Naive thymus-derived CD8-positive, alpha-beta T cell (primary cell): ENCODE measurements at regions of chr16 and their contacts with region 1.

Region 1: GRCh38 chr16:89246903-89247733 is 29.6 kb downstream of the ZNF778 start:
- DNase-seq: peak; percentile 90 to 99 (median 95)
- ATAC-seq: peak; percentile 85 to 87
- H3K4me3 Mint-ChIP-seq: peak overlapping the region; percentile 67 to 86 (median 76)
- H3K27ac Mint-ChIP-seq: peak overlapping the region in 7 of 10 donors; percentile 51 to 85 (median 75)
- H3K4me1 Mint-ChIP-seq: peaks cover 5 to 33% (median 10%) of the 10 kb centered on the region in 4 donors
- H3K27me3 Mint-ChIP-seq: no peaks in the 10 kb centered on the region

Region 2: DNA sequence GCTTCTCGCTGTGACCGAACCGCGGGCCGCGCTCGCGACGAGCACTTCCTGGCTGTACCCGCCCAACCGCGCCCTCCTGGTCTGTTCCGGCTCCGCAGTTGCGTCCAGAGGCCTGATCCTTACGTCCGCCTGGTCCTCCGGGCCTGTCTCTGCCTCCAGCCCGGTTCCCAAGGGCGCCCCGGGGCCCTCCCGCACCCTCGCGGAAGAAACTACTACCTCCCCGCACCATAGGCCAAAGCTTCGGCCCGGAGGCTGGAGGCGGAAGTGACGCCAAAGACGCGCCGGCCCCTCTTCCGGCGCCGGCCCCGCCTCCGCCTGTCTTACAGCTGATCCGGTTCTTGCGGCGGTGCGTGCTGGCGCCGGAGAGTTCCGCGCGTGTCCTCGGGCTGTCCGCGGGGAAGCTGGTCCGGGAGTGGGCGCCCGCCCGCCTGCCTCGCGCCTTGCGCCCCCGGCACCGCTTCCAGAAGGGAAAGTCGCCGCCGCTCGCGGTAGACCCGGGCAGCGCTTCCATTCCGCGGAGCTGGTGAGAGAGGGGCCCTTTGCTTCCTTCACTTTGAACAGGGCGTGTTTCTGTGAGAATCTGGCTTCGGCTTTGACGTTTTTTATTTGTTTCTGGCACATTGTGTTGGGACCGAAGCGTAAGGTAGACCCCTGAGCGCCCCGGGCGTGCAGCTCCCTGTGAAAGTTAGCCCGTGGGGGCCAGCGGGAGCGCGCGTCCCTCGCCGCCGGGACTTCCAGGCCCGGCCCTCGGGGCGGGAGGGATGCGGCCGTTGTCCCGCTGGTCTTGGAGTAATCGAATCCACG is 29.5 kb before region 1 on chr16 and contains the start of gene ZNF778:
- POLR2A ChIA-PET with region 1: interaction called, 10 read pairs
- DNase-seq: peak; percentile 72 to 89 (median 80)
- ATAC-seq: peak; percentile 79 to 80
- H3K4me3 Mint-ChIP-seq: peak within 1 kb of the TSS; percentile 79 to 97 (median 87)
- H3K27ac Mint-ChIP-seq: peak within 1 kb of the TSS; percentile 84 to 96 (median 88)
- H3K4me1 Mint-ChIP-seq: peaks cover 12 to 39% (median 26%) of the 10 kb centered on the region in 4 donors
- H3K27me3 Mint-ChIP-seq: no peaks in the 10 kb centered on the region
- polyA plus RNA-seq, gene ZNF778: 2.0 to 5.5 (median 2.9) TPM